ENCODE measurements at regions of chr4 and their contacts with region 1.

Region 1: DNA sequence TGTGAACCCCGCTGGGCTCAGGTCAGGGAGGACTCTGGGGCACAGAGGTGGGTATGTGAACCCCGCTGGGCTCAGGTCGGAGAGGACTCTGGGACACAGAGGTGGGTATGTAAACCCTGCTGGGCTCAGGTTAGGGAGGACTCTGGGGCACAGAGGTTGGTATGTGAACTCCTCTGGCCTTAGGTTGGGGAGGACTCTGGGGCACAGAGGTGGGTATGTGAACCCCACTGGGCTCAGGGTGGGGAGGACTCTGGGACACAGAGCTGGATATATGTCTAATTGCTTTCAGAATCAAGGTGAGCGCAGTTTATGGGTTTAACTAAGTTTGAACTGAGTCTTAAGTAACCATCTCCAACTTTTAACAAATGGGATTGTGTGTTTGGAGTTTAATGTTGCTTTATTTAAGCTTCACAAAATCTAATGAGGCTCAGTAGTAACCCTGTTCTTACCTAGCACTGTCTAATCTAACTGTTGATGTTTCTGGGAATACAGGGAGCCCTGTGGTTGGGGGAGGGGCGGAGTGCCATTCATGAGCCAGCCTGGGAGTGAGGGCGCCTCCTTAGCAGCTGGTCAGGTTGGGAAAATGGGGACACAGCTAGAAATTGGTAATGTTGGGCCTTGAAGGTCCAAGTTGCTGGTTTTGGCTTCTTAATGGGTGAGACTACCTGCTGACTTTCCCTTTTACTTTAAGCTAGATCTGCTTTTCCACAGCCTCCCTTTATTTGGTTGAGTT is 23.1 kb upstream of the TADA2B start:
- DNase-seq: no peak
- ATAC-seq: no peak
- H3K4me3 ChIP-seq: no peak overlapping the region
- H3K27ac ChIP-seq: no peak overlapping the region
- H3K4me1 ChIP-seq: peaks cover 8% of the 10 kb centered on the region
- H3K27me3 ChIP-seq: no peaks in the 10 kb centered on the region
- CTCF ChIP-seq: no peak
- POLR2A ChIP-seq: no peak
- RAD21 ChIP-seq: no peak

Region 2: DNA sequence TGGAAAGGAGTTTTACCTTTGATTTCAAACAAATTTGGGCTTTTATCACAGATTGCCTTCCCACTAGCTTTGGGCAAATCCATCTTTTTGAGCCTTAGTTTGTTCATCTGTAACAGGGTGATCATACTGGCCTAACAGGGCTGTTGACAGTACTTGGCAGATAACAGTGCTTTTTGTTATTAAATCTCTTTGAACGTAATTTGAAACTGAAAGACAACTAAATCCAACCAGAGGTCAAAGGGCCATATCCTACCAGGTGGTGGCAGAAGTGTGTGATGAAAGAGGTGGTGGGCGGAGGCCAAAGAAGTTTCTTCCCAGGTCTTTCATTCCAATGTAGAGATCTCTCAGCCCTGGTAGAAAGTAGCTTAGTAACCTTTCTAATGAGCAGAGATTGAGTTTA is 12.2 kb before region 1 on chr4:
- CTCF ChIA-PET with region 1: interaction called, 10 read pairs
- POLR2A ChIA-PET with region 1: no interaction called
- dilution Hi-C with region 1: no loop called
- in situ Hi-C with region 1: no loop called
- intact Hi-C with region 1: no loop called
- DNase-seq: peak; percentile 36
- ATAC-seq: peak; percentile 24; the same call in 1 of the 2 replicates
- H3K4me3 ChIP-seq: no peak overlapping the region
- H3K27ac ChIP-seq: no peak overlapping the region
- H3K4me1 ChIP-seq: peaks cover 2% of the 10 kb centered on the region; the same call in 1 of the 2 replicates
- H3K27me3 ChIP-seq: no peaks in the 10 kb centered on the region
- CTCF ChIP-seq: no peak
- POLR2A ChIP-seq: no peak
- RAD21 ChIP-seq: no peak

Region 3: DNA sequence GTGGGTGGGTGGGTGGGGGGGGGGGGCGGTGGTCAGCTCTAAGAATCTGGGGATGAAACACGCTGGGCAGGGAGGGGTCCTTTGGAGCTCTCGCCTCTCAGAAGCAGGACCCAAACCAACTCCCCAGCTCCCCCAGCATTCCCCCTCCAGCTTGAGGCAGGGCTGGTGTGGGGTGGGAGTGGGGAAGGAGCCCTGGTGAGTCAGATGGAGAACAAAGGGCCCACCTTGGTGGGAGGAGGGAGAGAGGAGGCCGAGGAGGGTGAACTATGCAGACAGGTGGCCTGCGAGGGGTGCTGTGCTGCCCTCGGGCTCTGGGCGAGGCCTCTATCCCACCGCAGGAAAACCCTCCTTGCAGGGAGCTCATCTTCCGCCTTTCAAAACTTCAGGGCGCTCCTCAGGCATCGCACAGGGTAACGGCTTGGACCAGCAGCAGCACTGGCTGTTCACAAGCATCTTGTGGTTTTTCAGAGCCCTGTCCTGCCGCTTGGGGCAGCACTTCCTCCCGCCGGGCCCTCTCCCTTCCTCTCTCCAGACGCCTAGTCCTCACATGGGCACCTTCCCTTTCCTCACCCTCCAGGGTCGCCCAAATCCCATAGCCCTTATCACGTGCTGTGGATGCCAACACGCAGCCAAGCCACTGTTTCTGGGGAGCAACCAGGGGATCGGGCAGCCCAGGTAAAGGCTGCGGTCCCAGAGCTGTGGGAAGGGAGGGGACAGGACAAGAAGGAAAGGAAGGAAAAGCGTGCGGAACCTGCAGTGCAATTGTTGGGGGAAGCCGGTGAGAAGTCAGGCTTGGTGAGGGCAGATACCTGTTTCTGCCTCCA is 81.8 kb after region 1 on chr4:
- CTCF ChIA-PET with region 1: no interaction called
- POLR2A ChIA-PET with region 1: no interaction called
- dilution Hi-C with region 1: no loop called
- in situ Hi-C with region 1: no loop called
- intact Hi-C with region 1: no loop called
- DNase-seq: peak; percentile 60
- ATAC-seq: peak; percentile 79
- H3K4me3 ChIP-seq: peak overlapping the region; percentile 20; the same call in 1 of the 2 replicates
- H3K27ac ChIP-seq: no peak overlapping the region
- H3K4me1 ChIP-seq: peaks cover 6% of the 10 kb centered on the region; the same call in 1 of the 2 replicates
- H3K27me3 ChIP-seq: peaks cover 19% of the 10 kb centered on the region
- CTCF ChIP-seq: peak; percentile 63
- POLR2A ChIP-seq: no peak
- RAD21 ChIP-seq: peak; percentile 45

Measured in IMR-90 (cell line).